ENCODE measurements at regions of chr3 and their contacts with region 1.

Region 1: GRCh38 chr3:39279745-39280517 is at the start of gene CX3CR1:
- ATAC-seq: peak in 2 of 8 experiments; percentile 33 to 39
- H3K4me3 ChIP-seq: no peak within 1 kb of the TSS
- H3K27ac ChIP-seq: no peak within 1 kb of the TSS
- H3K4me1 ChIP-seq: no peaks in the 10 kb centered on the region
- total RNA-seq, gene CX3CR1: 0.08 to 0.40 (median 0.19) TPM in 6 of 8 experiments, not detected in the others

Region 2: GRCh38 chr3:39189959-39190269 is 90.0 kb before region 1 on chr3:
- in situ Hi-C with region 1: loop called in 2 of 9 experiments (anchors 10 kb)
- ATAC-seq: peak; percentile 44 to 89 (median 72)
- H3K4me3 ChIP-seq: no peak overlapping the region
- H3K27ac ChIP-seq: no peak overlapping the region
- H3K4me1 ChIP-seq: no peaks in the 10 kb centered on the region